Right cardiac atrium (tissue), 5 donors: ENCODE measurements at regions of chr21 and their contacts with region 1.

Region 1: GRCh38 chr21:38159355-38159754 is 97.4 kb upstream of the KCNJ15 start:
- DNase-seq: peak; percentile 47 to 77 (median 54)
- ATAC-seq: peak; percentile 61 to 74
- H3K4me3 ChIP-seq: no peak overlapping the region
- H3K27ac ChIP-seq: no peak overlapping the region
- H3K4me1 ChIP-seq: no peaks in the 10 kb centered on the region
- H3K27me3 ChIP-seq: no peaks in the 10 kb centered on the region

Region 2: GRCh38 chr21:38219049-38219628 is 59.8 kb after region 1 on chr21:
- intact Hi-C with region 1: loop called in 1 of 4 experiments (anchors 10 kb)
- DNase-seq: peak; percentile 65 to 77 (median 77)
- ATAC-seq: peak; percentile 86 to 91
- H3K4me3 ChIP-seq: no peak overlapping the region
- H3K27ac ChIP-seq: no peak overlapping the region
- H3K4me1 ChIP-seq: no peaks in the 10 kb centered on the region
- H3K27me3 ChIP-seq: no peaks in the 10 kb centered on the region

Region 3: GRCh38 chr21:38236232-38236631 is 76.9 kb after region 1 on chr21:
- intact Hi-C with region 1: no loop called
- DNase-seq: no peak
- ATAC-seq: no peak
- H3K4me3 ChIP-seq: no peak overlapping the region
- H3K27ac ChIP-seq: no peak overlapping the region
- H3K4me1 ChIP-seq: no peaks in the 10 kb centered on the region
- H3K27me3 ChIP-seq: no peaks in the 10 kb centered on the region

Region 4: DNA sequence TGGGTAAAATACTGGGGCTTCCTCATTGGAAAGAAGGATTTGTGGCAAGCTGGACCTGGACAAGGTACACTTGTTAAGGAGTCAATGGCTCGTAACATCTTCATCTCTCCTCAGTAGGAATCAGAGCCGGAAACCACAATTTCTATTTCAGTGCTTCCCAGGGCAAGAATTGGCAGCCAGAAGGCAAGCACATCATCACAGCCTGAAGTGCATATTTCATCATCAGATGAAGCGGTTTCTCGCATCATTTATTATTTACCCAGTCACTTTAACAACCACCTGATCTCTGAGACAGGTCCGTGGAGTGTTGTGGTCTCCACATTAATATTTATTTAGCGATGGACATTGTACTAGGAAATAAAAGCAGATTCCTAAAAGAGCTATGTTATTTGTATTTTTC is 152.4 kb after region 1 on chr21:
- intact Hi-C with region 1: no loop called
- DNase-seq: no peak
- ATAC-seq: no peak
- H3K4me3 ChIP-seq: no peak overlapping the region
- H3K27ac ChIP-seq: no peak overlapping the region
- H3K4me1 ChIP-seq: no peaks in the 10 kb centered on the region
- H3K27me3 ChIP-seq: no peaks in the 10 kb centered on the region